ENCODE measurements at regions of chr15 and their contacts with region 1.

Region 1: GRCh38 chr15:46137443-46137842 is 502.6 kb downstream of the SQOR start:
- DNase-seq: no peak
- H3K4me3 ChIP-seq: no peak overlapping the region
- H3K4me3 Mint-ChIP-seq: no peak overlapping the region
- H3K27ac Mint-ChIP-seq: no peak overlapping the region
- H3K4me1 ChIP-seq: no peaks in the 10 kb centered on the region
- H3K4me1 Mint-ChIP-seq: no peaks in the 10 kb centered on the region
- H3K27me3 ChIP-seq: no peaks in the 10 kb centered on the region
- H3K27me3 Mint-ChIP-seq: peaks cover 6% of the 10 kb centered on the region
- CTCF ChIP-seq: no peak

Region 2: GRCh38 chr15:44763848-44764247 is 1373.6 kb before region 1 on chr15:
- CTCF ChIA-PET with region 1: no interaction called
- POLR2A ChIA-PET with region 1: interaction called, 16 read pairs
- intact Hi-C with region 1: no loop called
- DNase-seq: no peak
- H3K4me3 ChIP-seq: no peak overlapping the region
- H3K4me3 Mint-ChIP-seq: no peak overlapping the region
- H3K27ac Mint-ChIP-seq: no peak overlapping the region
- H3K4me1 ChIP-seq: no peaks in the 10 kb centered on the region
- H3K4me1 Mint-ChIP-seq: no peaks in the 10 kb centered on the region
- H3K27me3 ChIP-seq: no peaks in the 10 kb centered on the region
- H3K27me3 Mint-ChIP-seq: peaks cover 14% of the 10 kb centered on the region
- CTCF ChIP-seq: no peak

Region 3: GRCh38 chr15:45821390-45821789 is 316.1 kb before region 1 on chr15:
- CTCF ChIA-PET with region 1: no interaction called
- POLR2A ChIA-PET with region 1: no interaction called
- intact Hi-C with region 1: no loop called
- DNase-seq: no peak
- H3K4me3 ChIP-seq: no peak overlapping the region
- H3K4me3 Mint-ChIP-seq: no peak overlapping the region
- H3K27ac Mint-ChIP-seq: no peak overlapping the region
- H3K4me1 ChIP-seq: no peaks in the 10 kb centered on the region; the same call in 1 of the 2 replicates
- H3K4me1 Mint-ChIP-seq: peaks cover 10% of the 10 kb centered on the region
- H3K27me3 ChIP-seq: no peaks in the 10 kb centered on the region
- H3K27me3 Mint-ChIP-seq: no peaks in the 10 kb centered on the region
- CTCF ChIP-seq: no peak

Region 4: GRCh38 chr15:46091860-46092450 is 45.5 kb before region 1 on chr15:
- CTCF ChIA-PET with region 1: no interaction called
- POLR2A ChIA-PET with region 1: no interaction called
- intact Hi-C with region 1: no loop called
- DNase-seq: peak in 1 of 2 experiments; percentile 40
- H3K4me3 ChIP-seq: no peak overlapping the region
- H3K4me3 Mint-ChIP-seq: no peak overlapping the region
- H3K27ac Mint-ChIP-seq: no peak overlapping the region
- H3K4me1 ChIP-seq: no peaks in the 10 kb centered on the region
- H3K4me1 Mint-ChIP-seq: no peaks in the 10 kb centered on the region
- H3K27me3 ChIP-seq: no peaks in the 10 kb centered on the region
- H3K27me3 Mint-ChIP-seq: no peaks in the 10 kb centered on the region
- CTCF ChIP-seq: peak; percentile 37 to 53

Region 5: GRCh38 chr15:46177219-46177618 is 39.8 kb after region 1 on chr15:
- CTCF ChIA-PET with region 1: no interaction called
- POLR2A ChIA-PET with region 1: no interaction called
- intact Hi-C with region 1: no loop called
- DNase-seq: no peak
- H3K4me3 ChIP-seq: no peak overlapping the region
- H3K4me3 Mint-ChIP-seq: no peak overlapping the region
- H3K27ac Mint-ChIP-seq: no peak overlapping the region
- H3K4me1 ChIP-seq: no peaks in the 10 kb centered on the region
- H3K4me1 Mint-ChIP-seq: no peaks in the 10 kb centered on the region
- H3K27me3 ChIP-seq: no peaks in the 10 kb centered on the region
- H3K27me3 Mint-ChIP-seq: no peaks in the 10 kb centered on the region
- CTCF ChIP-seq: no peak